Psoas muscle (tissue), 8 donors: ENCODE measurements at regions of chr1 and their contacts with region 1.

Region 1: DNA sequence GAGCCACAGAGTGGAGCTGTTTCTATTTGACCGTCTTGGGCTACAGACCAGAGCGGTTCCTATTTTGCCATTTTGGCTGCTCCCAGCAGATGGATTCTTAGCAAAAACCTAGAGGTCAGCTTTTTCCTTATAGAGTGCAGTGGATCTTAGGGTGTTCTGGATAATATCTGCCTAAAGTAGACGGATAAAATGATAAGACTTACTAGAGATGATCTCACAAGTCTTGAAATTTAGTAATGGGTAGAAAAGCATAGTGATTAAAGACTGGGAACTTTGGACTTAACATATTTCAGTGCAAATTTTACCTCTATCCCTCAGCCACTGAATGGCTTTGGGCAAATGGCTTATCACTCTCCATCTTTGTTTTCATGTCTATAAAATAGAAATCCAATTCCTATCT is 439.8 kb downstream of the ADGRL2 start:
- DNase-seq: no peak
- ATAC-seq: no peak
- H3K4me3 ChIP-seq: no peak overlapping the region
- H3K27ac ChIP-seq: no peak overlapping the region
- H3K4me1 ChIP-seq: no peaks in the 10 kb centered on the region
- H3K27me3 ChIP-seq: no peaks in the 10 kb centered on the region
- CTCF ChIP-seq: no peak

Region 2: DNA sequence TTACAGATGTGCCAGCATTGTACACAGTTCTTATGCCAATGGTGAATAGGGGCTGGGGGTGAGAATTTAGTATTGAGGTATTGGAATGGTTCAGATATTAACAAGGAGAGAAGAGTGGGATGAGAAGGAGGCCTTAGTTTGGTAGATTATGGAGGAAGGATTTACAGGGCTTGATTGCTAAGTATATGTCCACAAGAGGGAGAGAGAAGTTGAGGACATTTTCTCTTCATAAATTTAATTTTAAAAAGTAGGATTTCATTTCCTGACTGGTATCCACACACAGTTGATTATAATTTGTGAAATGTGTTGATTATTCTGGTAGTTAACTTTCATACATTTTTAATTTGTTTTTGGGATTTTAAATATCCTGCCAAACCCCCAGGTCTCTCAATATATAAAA is 226.9 kb before region 1 on chr1:
- intact Hi-C with region 1: no loop called
- DNase-seq: no peak
- ATAC-seq: no peak
- H3K4me3 ChIP-seq: no peak overlapping the region
- H3K27ac ChIP-seq: no peak overlapping the region
- H3K4me1 ChIP-seq: no peaks in the 10 kb centered on the region
- H3K27me3 ChIP-seq: no peaks in the 10 kb centered on the region
- CTCF ChIP-seq: no peak

Region 3: DNA sequence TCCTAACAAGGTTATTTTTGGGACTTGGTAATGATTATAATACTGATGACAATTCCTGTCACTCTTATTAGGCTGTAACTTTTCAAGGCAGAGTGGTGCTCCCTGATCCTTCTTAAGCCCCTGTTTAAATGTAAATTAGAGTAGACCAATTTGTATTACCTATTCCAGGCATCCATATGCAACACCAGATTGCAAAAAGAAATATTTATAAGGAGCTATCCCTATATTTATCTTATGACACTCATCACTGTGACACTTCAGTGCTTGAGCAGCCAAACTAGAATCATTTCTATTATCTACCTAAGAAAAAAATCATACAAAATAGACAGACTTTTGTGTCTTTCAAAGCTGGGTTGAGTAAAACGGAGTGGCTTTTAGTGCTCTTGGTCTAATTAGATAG is 22.8 kb after region 1 on chr1:
- intact Hi-C with region 1: loop called in 1 of 2 experiments (anchors 2 kb)
- DNase-seq: no peak
- ATAC-seq: no peak
- H3K4me3 ChIP-seq: no peak overlapping the region
- H3K27ac ChIP-seq: no peak overlapping the region
- H3K4me1 ChIP-seq: no peaks in the 10 kb centered on the region
- H3K27me3 ChIP-seq: no peaks in the 10 kb centered on the region
- CTCF ChIP-seq: no peak